ENCODE measurements at regions of chr17 and their contacts with region 1.

Region 1: DNA sequence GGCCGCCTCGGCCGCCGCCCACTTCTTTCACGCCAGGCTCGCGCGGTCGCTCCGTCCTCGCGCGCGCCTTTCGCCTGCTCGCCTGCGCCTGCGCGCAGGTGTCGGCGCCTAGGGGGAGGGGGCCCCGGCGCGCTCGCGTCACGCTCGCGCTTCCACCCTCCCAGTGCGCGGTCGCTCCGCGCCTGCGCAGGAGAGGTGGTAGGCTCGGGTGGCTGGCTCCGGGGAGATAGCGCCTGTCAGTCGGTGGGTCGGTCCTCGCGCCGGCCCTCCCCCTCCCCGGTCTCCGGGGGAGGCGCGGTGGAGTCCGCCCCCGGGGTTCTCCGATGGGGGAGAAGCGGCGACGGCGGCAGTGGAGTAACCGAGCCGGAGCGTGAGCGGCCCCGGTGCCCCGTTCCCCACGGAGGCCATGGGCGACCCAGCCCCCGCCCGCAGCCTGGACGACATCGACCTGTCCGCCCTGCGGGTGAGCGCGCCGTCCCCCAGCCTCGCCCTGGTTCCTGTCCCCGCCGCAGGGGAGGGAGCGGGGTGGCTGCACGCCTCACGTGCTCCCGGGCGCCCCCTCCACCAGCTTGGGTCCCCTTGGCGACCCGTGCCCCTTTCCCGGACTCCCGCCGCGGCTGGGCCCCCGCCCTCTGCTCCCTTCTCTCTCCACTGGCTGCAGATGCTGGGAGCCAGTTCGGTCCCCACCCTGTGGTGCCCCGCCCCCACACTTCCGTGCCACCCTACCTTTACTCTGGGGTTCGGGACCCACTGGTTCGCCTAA is at the start of gene MINK1:
- DNase-seq: peak; percentile 89 to 96 (median 92)
- ATAC-seq: peak; percentile 81 to 97 (median 96)
- H3K4me3 ChIP-seq: peak within 1 kb of the TSS; percentile 59 to 99 (median 88)
- H3K27ac ChIP-seq: peak within 1 kb of the TSS; percentile 72 to 98 (median 90)
- H3K4me1 ChIP-seq: peaks cover 4 to 49% (median 39%) of the 10 kb centered on the region in 12 donors
- H3K27me3 ChIP-seq: no peaks in the 10 kb centered on the region
- CTCF ChIP-seq: peak in 1 of 12 donors; percentile 8
- POLR2A ChIP-seq: peak; percentile 18 to 94
- total RNA-seq, gene MINK1: 23.1 to 55.8 (median 36.0) TPM

Region 2: DNA sequence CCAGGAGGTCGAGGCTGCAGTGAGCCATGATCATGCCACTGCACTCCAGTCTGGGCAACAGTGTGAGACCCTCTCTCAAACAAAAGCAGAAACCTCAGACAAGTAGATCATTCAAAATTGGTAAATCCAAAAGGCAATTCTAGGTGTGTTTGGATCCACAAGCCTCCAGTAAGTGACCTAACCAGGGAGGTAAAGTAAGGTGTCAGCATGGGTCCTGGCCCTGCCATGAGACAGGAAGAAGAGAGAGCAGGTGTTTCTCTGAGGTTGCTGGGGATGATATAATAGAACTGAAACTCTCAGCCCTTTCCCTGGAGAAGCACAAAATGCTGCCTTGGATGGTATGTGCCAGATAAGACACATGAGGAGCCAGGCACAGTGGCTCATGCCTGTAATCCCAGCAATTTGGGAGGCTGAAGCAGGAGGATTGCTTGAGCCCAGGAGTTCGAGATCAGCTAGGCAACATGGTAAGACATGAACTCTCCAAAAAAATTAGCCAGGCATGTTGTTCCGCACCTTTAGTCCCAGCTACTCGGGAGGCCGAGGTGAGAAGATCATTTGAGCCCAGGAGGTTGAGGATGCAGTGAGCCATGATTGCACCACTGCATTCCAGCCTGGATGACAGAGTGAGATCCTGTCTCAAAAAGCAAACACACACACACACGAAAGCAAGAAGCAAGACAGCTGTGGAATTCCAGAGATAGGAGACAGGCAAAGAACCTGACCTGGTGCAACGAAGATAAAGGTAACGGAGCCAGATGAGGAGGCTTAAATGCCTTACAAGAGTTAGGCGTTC is 55.2 kb before region 1 on chr17:
- intact Hi-C with region 1: no loop called
- DNase-seq: no peak
- ATAC-seq: no peak
- H3K4me3 ChIP-seq: no peak overlapping the region
- H3K27ac ChIP-seq: no peak overlapping the region
- H3K4me1 ChIP-seq: no peaks in the 10 kb centered on the region
- H3K27me3 ChIP-seq: peaks cover 0 to 39% (median 16%) of the 10 kb centered on the region in 9 donors
- CTCF ChIP-seq: no peak
- POLR2A ChIP-seq: no peak

Region 3: GRCh38 chr17:4796553-4796921 is 36.8 kb before region 1 on chr17:
- intact Hi-C with region 1: loop called in 3 of 10 experiments (anchors 5 kb)
- DNase-seq: peak in 1 of 5 donors; percentile 57
- ATAC-seq: peak in 2 of 4 donors; percentile 36 to 66
- H3K4me3 ChIP-seq: peak overlapping the region; percentile 38 to 99 (median 78)
- H3K27ac ChIP-seq: peak overlapping the region; percentile 3 to 89 (median 80)
- H3K4me1 ChIP-seq: peaks cover 0 to 16% (median 7%) of the 10 kb centered on the region in 12 donors
- H3K27me3 ChIP-seq: no peaks in the 10 kb centered on the region
- CTCF ChIP-seq: no peak
- POLR2A ChIP-seq: no peak

Region 4: DNA sequence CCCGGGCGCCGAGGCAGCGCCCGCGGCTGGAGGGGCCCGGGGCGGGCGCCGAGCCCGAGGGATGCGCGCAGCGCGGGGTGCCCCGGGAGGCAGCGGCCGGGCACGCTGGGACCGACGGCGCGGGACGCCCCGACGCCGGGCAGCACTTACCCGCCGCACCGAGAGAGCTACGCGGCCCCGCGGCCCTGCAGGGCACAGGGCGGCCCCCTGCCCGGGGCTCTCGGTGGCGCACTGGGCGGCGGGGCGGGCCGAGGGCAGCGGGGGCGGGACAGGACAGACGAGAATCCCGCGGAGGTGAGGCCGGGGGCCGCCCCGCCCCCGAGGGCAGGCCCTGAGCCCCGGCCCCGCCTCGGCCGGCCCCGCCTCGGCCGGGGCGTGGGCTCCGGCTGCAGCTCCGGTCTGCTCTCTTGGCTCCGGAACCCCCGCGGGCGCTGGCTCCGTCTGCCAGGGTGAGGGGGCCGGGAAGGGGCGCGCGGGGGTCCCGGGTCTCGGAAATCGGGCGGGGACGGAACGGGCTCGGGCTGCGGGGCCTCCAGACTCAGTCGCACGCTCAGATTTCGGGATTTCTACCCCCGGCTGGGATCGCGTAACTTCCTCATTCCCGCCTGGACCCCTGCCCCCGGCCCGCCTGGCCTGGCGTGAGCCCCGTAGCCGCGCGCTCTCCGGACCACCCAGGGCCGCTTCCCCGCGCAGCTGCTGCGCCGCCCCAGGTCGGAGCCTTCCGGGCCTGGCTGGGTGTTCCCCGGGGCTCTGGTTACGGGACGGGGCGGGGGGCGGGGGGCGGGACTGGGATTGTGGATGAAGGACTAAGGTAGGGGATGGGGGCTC is 26.4 kb before region 1 on chr17 and contains the start of gene PLD2:
- intact Hi-C with region 1: loop called in 1 of 10 experiments (anchors 2 kb)
- DNase-seq: peak; percentile 89 to 94 (median 90)
- ATAC-seq: peak; percentile 84 to 99 (median 98)
- H3K4me3 ChIP-seq: peak within 1 kb of the TSS; percentile 69 to 100 (median 86)
- H3K27ac ChIP-seq: peak within 1 kb of the TSS; percentile 45 to 92 (median 85)
- H3K4me1 ChIP-seq: peaks cover 6 to 27% (median 16%) of the 10 kb centered on the region in 12 donors
- H3K27me3 ChIP-seq: no peaks in the 10 kb centered on the region
- CTCF ChIP-seq: peak in 1 of 12 donors; percentile 7
- POLR2A ChIP-seq: peak in 1 of 2 donors; percentile 72
- total RNA-seq, gene PLD2: 5.5 to 17.9 (median 8.5) TPM

Region 5: DNA sequence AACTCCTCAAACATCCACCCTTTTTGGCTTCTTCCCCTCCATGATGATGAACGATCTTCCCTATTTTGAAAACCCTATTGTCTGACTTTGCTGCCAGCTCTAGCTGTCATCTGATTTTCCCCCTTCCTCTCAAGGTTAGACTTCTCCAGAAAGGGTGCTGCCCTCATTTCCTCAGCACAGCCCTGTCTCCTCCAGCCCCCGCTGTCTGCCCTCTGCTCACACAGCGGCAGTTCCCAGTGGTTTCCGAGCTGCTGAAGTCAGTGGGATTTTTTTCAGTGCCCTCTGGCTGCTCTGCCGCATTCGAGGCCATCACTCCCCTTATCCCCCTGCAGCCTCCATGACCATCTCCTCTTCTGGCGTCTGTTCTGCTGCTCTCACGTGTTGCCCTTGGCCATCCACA is 39.4 kb after region 1 on chr17:
- intact Hi-C with region 1: loop called in 4 of 10 experiments (anchors 5 to 10 kb)
- DNase-seq: no peak
- ATAC-seq: peak in 3 of 4 donors; percentile 16 to 66 (median 62)
- H3K4me3 ChIP-seq: no peak overlapping the region
- H3K27ac ChIP-seq: peak overlapping the region in 1 of 12 donors; percentile 60
- H3K4me1 ChIP-seq: peaks cover 0 to 37% (median 0%) of the 10 kb centered on the region in 12 donors
- H3K27me3 ChIP-seq: no peaks in the 10 kb centered on the region
- CTCF ChIP-seq: no peak
- POLR2A ChIP-seq: no peak

Region 6: DNA sequence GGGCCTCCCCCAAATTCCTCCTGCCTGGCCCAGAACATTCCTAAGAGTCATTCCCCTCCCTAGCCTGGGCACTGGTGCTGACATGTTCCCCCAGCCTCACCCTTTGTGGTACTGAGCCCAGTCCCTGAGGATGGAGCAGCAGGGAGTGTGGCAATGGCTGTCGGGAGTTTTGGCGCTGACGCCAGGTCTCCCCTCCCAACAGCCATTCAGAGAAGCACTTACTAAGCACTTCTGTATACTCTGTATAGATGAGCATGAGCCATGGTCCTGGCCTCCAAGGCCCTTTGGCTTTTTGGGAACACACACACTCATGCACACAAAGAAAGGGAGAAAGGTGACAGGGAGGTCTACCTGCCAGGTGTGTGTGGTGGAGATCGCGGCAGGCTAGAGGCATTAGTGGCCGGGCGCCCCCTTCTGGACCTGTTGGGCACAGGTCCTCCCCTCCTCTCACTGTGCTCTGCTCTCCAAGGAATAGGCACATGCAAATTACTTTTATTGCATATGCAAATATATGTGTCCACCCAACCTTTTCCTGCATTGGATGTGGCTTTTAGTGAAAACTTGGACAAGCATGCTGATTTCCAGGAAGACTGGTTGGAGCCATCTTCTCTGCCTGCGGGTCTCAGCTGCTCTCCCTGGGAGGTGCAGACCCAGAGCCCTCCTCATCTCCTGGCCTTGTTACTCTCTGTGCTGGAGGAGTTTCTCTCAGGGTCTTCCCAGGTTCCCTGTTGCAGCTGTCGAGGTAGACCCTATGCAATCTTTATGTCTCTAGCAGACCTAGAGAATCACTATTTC is 48.6 kb after region 1 on chr17:
- intact Hi-C with region 1: loop called in 6 of 10 experiments (anchors 2 to 10 kb)
- DNase-seq: peak in 3 of 5 donors; percentile 43 to 76 (median 60)
- ATAC-seq: peak; percentile 50 to 78 (median 66)
- H3K4me3 ChIP-seq: no peak overlapping the region
- H3K27ac ChIP-seq: no peak overlapping the region
- H3K4me1 ChIP-seq: peaks cover 0 to 26% (median 0%) of the 10 kb centered on the region in 12 donors
- H3K27me3 ChIP-seq: no peaks in the 10 kb centered on the region
- CTCF ChIP-seq: peak; percentile 69 to 86 (median 76)
- POLR2A ChIP-seq: no peak